HepG2 (cell line): ENCODE measurements at regions of chr3 and their contacts with region 1.

Region 1: GRCh38 chr3:133248389-133248788 is 151.5 kb upstream of the BFSP2 start:
- DNase-seq: no peak
- ATAC-seq: no peak
- H3K4me3 ChIP-seq: no peak overlapping the region
- H3K27ac ChIP-seq: no peak overlapping the region
- H3K4me1 ChIP-seq: no peaks in the 10 kb centered on the region
- H3K27me3 ChIP-seq: no peaks in the 10 kb centered on the region; a peak in 2 of 5 replicates
- CTCF ChIP-seq: no peak
- EP300 ChIP-seq: no peak
- POLR2A ChIP-seq: no peak
- RAD21 ChIP-seq: no peak

Region 2: GRCh38 chr3:133227813-133228212 is 20.6 kb before region 1 on chr3:
- CTCF ChIA-PET with region 1: no interaction called
- POLR2A ChIA-PET with region 1: no interaction called
- in situ Hi-C with region 1: no loop called
- intact Hi-C with region 1: loop called (anchors 1 kb)
- DNase-seq: no peak
- ATAC-seq: no peak
- H3K4me3 ChIP-seq: no peak overlapping the region
- H3K27ac ChIP-seq: no peak overlapping the region
- H3K4me1 ChIP-seq: no peaks in the 10 kb centered on the region
- H3K27me3 ChIP-seq: no peaks in the 10 kb centered on the region
- CTCF ChIP-seq: no peak
- EP300 ChIP-seq: no peak
- POLR2A ChIP-seq: no peak
- RAD21 ChIP-seq: no peak